ENCODE measurements at regions of chr1 and their contacts with region 1.

Region 1: GRCh38 chr1:206535853-206536188 is 28.5 kb downstream of the RASSF5 start:
- DNase-seq: no peak
- ATAC-seq: no peak
- H3K4me3 ChIP-seq: no peak overlapping the region
- H3K27ac ChIP-seq: no peak overlapping the region
- H3K4me1 ChIP-seq: no peaks in the 10 kb centered on the region
- H3K27me3 ChIP-seq: peaks cover 5 to 34% of the 10 kb centered on the region in 2 experiments; a peak in 4 of 5 replicates
- CTCF ChIP-seq: no peak
- EP300 ChIP-seq: no peak
- POLR2A ChIP-seq: no peak
- RAD21 ChIP-seq: no peak

Region 2: GRCh38 chr1:206503591-206504362 is 32.0 kb before region 1 on chr1:
- CTCF ChIA-PET with region 1: no interaction called
- POLR2A ChIA-PET with region 1: no interaction called
- in situ Hi-C with region 1: no loop called
- intact Hi-C with region 1: loop called (anchors 2 kb)
- DNase-seq: peak; percentile 79 to 88 (median 80)
- ATAC-seq: peak; percentile 72
- H3K4me3 ChIP-seq: no peak overlapping the region
- H3K27ac ChIP-seq: peak overlapping the region; percentile 81
- H3K4me1 ChIP-seq: peaks cover 35 to 52% of the 10 kb centered on the region in 2 experiments
- H3K27me3 ChIP-seq: peaks cover 8 to 13% of the 10 kb centered on the region in 2 experiments; a peak in 4 of 5 replicates
- CTCF ChIP-seq: no peak
- EP300 ChIP-seq: peak; percentile 60; the same call in 1 of the 2 replicates
- POLR2A ChIP-seq: no peak
- RAD21 ChIP-seq: peak; percentile 3 to 15; a peak in 1 of 4 replicates

Measured in K562 (cell line).